ENCODE measurements at regions of chr6 and their contacts with region 1.

Region 1: GRCh38 chr6:100719883-100720682 is 161.0 kb downstream of the ASCC3 start:
- H3K4me3 ChIP-seq: no peak overlapping the region
- H3K27ac ChIP-seq: no peak overlapping the region
- H3K4me1 ChIP-seq: 0 out of 2 replicates have a peak, but pooled peaks cover 2% of the 10 kb centered on the region
- CTCF ChIP-seq: no peak

Region 2: GRCh38 chr6:100446115-100447080 is 273.7 kb before region 1 on chr6:
- CTCF ChIA-PET with region 1: no interaction called
- POLR2A ChIA-PET with region 1: no interaction called
- H3K4me3 ChIP-seq: no peak overlapping the region
- H3K27ac ChIP-seq: no peak overlapping the region
- H3K4me1 ChIP-seq: no peaks in the 10 kb centered on the region
- CTCF ChIP-seq: no peak

Region 3: DNA sequence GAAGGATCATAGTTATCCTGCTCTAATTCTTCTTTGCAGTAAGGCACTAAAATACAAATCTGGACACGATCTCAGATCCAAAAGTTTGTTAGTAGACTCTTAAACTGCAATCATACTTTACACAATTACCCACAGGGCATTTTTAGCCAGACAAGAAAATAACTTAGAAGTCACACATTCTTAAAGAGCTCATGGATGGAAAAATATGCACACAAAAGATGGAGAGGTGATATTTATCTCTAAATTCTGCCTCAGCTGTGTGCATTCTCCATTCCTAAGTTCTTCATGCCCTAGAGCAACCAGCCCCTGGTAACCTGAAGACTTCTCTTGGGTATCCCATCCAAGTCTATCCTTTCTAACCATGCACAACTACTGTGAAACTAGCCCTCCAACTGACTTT is 10.0 kb before region 1 on chr6:
- CTCF ChIA-PET with region 1: interaction called, 10 read pairs
- POLR2A ChIA-PET with region 1: no interaction called
- H3K4me3 ChIP-seq: no peak overlapping the region
- H3K27ac ChIP-seq: no peak overlapping the region
- H3K4me1 ChIP-seq: no peaks in the 10 kb centered on the region
- CTCF ChIP-seq: no peak

Region 4: GRCh38 chr6:100913400-100914286 is 193.6 kb after region 1 on chr6:
- CTCF ChIA-PET with region 1: no interaction called
- POLR2A ChIA-PET with region 1: no interaction called
- H3K4me3 ChIP-seq: no peak overlapping the region
- H3K27ac ChIP-seq: no peak overlapping the region
- H3K4me1 ChIP-seq: no peaks in the 10 kb centered on the region
- CTCF ChIP-seq: no peak

Measured in HEK293 (cell line).